MCF 10A (cell line): ENCODE measurements at regions of chr6 and their contacts with region 1.

Region 1: GRCh38 chr6:145214570-145214969 is 520.8 kb downstream of the EPM2A start:
- DNase-seq: peak; percentile 60
- H3K4me3 Mint-ChIP-seq: no peak overlapping the region
- H3K27ac Mint-ChIP-seq: peak overlapping the region; percentile 59
- H3K4me1 Mint-ChIP-seq: no peaks in the 10 kb centered on the region
- H3K27me3 Mint-ChIP-seq: no peaks in the 10 kb centered on the region
- CTCF ChIP-seq: peak; percentile 36

Region 2: DNA sequence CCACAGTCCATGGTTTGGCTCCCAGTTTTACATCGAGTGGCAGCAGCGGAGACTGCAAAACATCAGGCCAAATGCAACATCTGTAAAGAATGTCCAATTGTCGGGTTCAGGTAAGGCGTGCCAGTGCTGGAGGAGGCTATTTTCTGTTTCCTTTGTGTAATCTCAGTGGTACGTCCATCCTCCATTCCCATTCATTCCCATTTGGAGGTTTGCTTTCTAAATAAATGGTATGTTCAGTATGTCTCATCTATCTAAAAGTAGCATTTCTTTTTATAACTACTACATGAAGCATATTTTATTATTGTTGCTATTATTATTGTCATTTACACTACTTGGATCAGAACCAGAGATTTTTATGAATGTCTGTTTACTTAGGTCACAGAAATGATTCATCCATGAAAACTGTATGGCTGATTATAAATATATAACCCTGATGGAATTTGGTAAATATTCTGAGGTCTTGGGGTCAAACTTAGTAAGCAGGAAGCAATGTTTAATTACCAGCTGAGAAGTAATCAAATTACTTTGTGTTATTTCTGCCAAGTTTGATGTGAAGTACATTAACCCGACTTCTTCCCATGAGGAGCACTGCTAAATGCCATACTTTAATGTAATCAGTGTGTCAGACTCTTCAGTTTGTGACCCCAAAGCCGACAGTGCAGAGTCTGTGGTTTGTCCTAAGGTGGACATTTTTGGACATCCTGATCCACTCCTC is 416.5 kb before region 1 on chr6:
- CTCF ChIA-PET with region 1: no interaction called
- POLR2A ChIA-PET with region 1: no interaction called
- intact Hi-C with region 1: loop called (anchors 10 kb)
- DNase-seq: peak; percentile 19
- H3K4me3 Mint-ChIP-seq: no peak overlapping the region
- H3K27ac Mint-ChIP-seq: no peak overlapping the region
- H3K4me1 Mint-ChIP-seq: no peaks in the 10 kb centered on the region
- H3K27me3 Mint-ChIP-seq: no peaks in the 10 kb centered on the region
- CTCF ChIP-seq: no peak

Region 3: GRCh38 chr6:144931172-144932035 is 283.2 kb before region 1 on chr6:
- CTCF ChIA-PET with region 1: no interaction called
- POLR2A ChIA-PET with region 1: no interaction called
- intact Hi-C with region 1: loop called (anchors 1 kb)
- DNase-seq: peak; percentile 59
- H3K4me3 Mint-ChIP-seq: no peak overlapping the region
- H3K27ac Mint-ChIP-seq: no peak overlapping the region
- H3K4me1 Mint-ChIP-seq: no peaks in the 10 kb centered on the region
- H3K27me3 Mint-ChIP-seq: no peaks in the 10 kb centered on the region
- CTCF ChIP-seq: peak; percentile 52

Region 4: GRCh38 chr6:145028144-145028818 is 186.3 kb before region 1 on chr6:
- CTCF ChIA-PET with region 1: no interaction called
- POLR2A ChIA-PET with region 1: no interaction called
- intact Hi-C with region 1: loop called (anchors 2 kb)
- DNase-seq: peak; percentile 60
- H3K4me3 Mint-ChIP-seq: no peak overlapping the region
- H3K27ac Mint-ChIP-seq: no peak overlapping the region
- H3K4me1 Mint-ChIP-seq: no peaks in the 10 kb centered on the region
- H3K27me3 Mint-ChIP-seq: no peaks in the 10 kb centered on the region
- CTCF ChIP-seq: peak; percentile 23

Region 5: DNA sequence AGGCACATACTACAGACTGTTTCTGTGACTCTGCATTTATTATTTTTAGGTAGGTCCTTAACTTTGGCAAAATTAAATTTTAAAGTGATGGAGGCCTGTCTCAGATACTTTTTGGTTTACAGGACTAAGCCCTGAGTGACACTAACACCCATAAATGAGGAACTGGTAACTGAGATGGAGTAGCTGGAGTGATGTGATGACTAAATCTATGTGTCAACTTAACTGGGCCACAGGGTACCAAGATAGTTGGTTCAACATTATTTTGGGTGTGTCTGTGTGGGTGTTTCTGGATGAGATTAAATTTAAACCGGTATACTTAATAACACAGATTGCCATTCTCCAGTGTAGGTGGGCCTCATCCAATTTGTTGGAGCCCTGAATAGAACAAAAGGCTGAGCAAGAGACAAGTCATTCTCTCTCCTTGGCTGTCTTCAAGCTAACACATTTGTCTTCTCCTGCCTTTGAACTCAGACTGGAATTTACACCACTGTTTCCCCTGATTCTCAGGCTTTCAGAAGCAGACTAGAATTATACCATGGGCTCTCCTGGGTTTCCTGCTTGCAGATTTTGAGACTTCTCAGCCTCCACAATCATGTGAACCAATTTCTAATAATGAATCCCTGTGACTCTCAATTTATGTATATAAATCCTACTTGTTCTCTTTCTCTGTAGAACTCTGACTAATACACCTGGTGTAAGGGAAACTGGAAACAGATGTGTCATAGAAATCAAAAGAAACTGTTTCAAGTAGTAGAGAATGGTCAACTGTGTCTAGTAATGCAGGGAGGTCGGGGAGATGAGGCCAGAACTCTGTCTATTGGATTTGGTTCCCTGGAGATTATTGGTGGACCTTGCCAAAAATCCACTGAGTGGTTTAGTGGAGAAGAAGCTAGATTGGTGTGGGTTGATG is 58.4 kb before region 1 on chr6:
- CTCF ChIA-PET with region 1: no interaction called
- POLR2A ChIA-PET with region 1: no interaction called
- intact Hi-C with region 1: no loop called
- DNase-seq: peak; percentile 9
- H3K4me3 Mint-ChIP-seq: no peak overlapping the region
- H3K27ac Mint-ChIP-seq: peak overlapping the region; percentile 52
- H3K4me1 Mint-ChIP-seq: peaks cover 27% of the 10 kb centered on the region
- H3K27me3 Mint-ChIP-seq: no peaks in the 10 kb centered on the region
- CTCF ChIP-seq: no peak

Region 6: DNA sequence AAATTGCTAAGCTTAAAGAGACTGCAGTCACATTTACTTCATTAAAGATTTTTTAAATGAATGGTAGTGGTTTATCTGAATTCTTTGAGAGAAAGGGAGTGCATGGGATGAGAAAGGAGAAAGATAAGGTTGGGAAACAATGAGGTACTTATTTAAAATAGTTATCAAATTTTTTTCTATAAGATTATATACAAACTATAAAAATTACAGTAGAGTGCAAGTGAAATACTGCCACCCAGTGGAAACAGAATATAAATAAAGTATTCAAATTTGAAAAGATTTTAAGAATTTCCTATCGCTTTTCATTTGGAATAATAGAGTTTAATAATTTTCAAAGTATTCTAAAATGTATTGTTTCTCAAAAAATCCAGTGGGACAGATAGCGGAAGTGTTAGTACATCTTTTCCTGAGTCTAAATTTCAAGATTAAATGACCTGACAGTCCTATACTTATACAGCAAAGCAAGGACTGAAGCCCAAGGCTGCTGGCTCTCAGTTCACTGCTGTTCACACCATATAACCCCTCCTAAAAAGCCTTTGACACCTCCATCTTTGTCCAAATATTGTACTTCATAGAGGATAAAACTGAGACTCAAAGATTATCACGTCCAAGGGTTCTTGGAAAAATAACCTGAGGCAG is 489.7 kb after region 1 on chr6:
- CTCF ChIA-PET with region 1: no interaction called
- POLR2A ChIA-PET with region 1: interaction called, 3 read pairs
- intact Hi-C with region 1: loop called (anchors 2 kb)
- DNase-seq: peak; percentile 19
- H3K4me3 Mint-ChIP-seq: no peak overlapping the region
- H3K27ac Mint-ChIP-seq: no peak overlapping the region
- H3K4me1 Mint-ChIP-seq: peaks cover 11% of the 10 kb centered on the region
- H3K27me3 Mint-ChIP-seq: no peaks in the 10 kb centered on the region
- CTCF ChIP-seq: peak; percentile 51